Dendritic cell treated with granulocyte-macrophage colony-stimulating factor and Interleukin-4, amounts not matched to agents 40 ng/mL and 50 ng/mL, for 4 days (primary cell): ENCODE measurements at regions of chr1 and their contacts with region 1.

Region 1: DNA sequence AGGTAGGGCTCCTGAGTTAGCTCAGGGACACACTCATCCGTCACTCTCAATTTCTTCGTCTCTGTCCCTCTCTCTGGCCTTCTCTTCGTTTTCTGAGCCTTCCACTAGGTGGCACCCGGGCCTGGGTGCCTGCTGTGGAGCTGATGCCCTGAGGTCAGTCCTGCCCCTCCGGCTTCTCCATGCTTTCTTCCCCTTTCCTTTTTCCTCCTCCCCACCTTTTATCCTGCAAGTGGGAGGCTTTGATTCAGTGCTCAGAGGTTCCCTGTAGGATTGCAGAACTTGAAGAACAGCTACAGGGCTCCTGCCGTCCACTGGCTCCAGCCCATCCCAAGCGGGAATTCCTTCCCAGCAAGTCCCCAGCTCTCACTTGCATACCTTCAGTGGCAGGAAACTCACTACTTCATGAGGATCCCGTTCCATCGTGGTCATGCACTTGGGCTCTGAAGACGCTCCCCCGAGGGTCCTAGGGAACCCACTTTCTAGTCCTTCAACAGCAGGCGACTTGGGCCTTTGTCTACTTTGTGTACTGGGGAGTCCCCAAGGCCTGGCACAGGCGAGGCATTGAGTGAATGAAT is 45.6 kb downstream of the SRRM1 start:
- H3K4me3 Mint-ChIP-seq: no peak overlapping the region
- H3K27ac Mint-ChIP-seq: no peak overlapping the region
- H3K4me1 Mint-ChIP-seq: peaks cover 26% of the 10 kb centered on the region
- H3K27me3 Mint-ChIP-seq: no peaks in the 10 kb centered on the region

Region 2: DNA sequence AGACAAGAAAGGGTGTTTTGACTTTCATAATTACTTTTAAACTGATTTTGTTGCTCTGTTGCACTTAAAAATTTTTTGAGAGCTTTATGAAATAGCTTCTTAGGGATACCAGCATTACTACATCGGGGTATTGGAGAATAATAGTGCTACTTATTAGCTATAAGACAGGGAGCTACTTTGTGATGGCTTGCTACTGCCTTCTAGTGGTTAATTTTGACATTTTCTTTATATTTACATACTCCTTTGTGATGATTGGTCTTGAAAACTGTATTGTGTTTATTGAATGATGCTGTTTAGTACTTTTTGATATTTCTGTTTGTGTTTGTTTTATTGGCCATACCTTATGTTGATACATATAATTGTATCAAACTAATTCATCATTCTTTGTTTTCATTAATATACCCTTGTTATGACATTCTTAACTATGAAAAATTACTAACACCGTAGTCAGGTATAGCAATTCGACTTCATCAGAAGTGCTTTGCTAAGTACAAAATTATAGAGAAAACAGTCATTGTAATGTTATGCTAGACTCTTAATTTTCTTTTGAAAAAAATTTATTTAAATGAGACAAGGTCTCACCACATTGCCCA is 142.1 kb after region 1 on chr1:
- intact Hi-C with region 1: loop called (anchors 2 kb)
- H3K4me3 Mint-ChIP-seq: no peak overlapping the region
- H3K27ac Mint-ChIP-seq: no peak overlapping the region
- H3K4me1 Mint-ChIP-seq: peaks cover 14% of the 10 kb centered on the region
- H3K27me3 Mint-ChIP-seq: no peaks in the 10 kb centered on the region

Region 3: GRCh38 chr1:25174730-25175612 is 486.3 kb after region 1 on chr1:
- intact Hi-C with region 1: no loop called
- H3K4me3 Mint-ChIP-seq: no peak overlapping the region
- H3K27ac Mint-ChIP-seq: no peak overlapping the region
- H3K4me1 Mint-ChIP-seq: no peaks in the 10 kb centered on the region
- H3K27me3 Mint-ChIP-seq: no peaks in the 10 kb centered on the region